Calu3 (cell line): ENCODE measurements at regions of chr14 and their contacts with region 1.

Region 1: GRCh38 chr14:64891839-64892375 is 12.2 kb upstream of the SPTB start:
- DNase-seq: peak; percentile 40
- H3K4me3 Mint-ChIP-seq: no peak overlapping the region
- H3K27ac Mint-ChIP-seq: no peak overlapping the region
- H3K4me1 Mint-ChIP-seq: no peaks in the 10 kb centered on the region
- H3K27me3 Mint-ChIP-seq: peaks cover 45% of the 10 kb centered on the region
- CTCF ChIP-seq: no peak

Region 2: DNA sequence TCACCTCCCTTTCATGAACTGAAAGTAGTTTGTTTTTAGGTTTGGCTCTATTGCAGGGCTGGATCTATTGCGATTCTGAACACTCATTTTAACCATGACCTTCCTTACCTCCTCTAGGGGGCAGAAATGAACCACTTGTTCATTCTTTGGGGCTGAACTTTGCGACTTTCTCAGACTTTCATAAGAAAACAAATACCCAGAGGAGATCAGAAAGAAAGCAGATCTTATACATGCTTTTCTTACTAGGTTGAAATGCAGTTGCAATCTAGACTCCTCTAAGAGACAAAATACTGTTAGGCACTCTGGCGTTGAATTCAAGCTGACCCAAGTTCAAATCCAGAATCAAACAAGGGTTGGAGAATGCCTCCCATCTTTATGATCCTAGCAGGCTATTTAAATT is 220.3 kb before region 1 on chr14:
- CTCF ChIA-PET with region 1: no interaction called
- intact Hi-C with region 1: loop called (anchors 5 kb)
- DNase-seq: no peak
- H3K4me3 Mint-ChIP-seq: no peak overlapping the region
- H3K27ac Mint-ChIP-seq: no peak overlapping the region
- H3K4me1 Mint-ChIP-seq: peaks cover 9% of the 10 kb centered on the region
- H3K27me3 Mint-ChIP-seq: no peaks in the 10 kb centered on the region
- CTCF ChIP-seq: peak; percentile 62

Region 3: GRCh38 chr14:64800000-64800399 is 91.9 kb before region 1 on chr14:
- CTCF ChIA-PET with region 1: interaction called, 17 read pairs
- intact Hi-C with region 1: loop called (anchors 2 kb)
- DNase-seq: peak; percentile 55
- H3K4me3 Mint-ChIP-seq: no peak overlapping the region
- H3K27ac Mint-ChIP-seq: no peak overlapping the region
- H3K4me1 Mint-ChIP-seq: no peaks in the 10 kb centered on the region
- H3K27me3 Mint-ChIP-seq: peaks cover 72% of the 10 kb centered on the region
- CTCF ChIP-seq: peak; percentile 35

Region 4: GRCh38 chr14:64823305-64823861 is 68.5 kb before region 1 on chr14:
- CTCF ChIA-PET with region 1: interaction called, 53 read pairs
- intact Hi-C with region 1: loop called (anchors 2 kb)
- DNase-seq: peak; percentile 86
- H3K4me3 Mint-ChIP-seq: peak overlapping the region; percentile 36
- H3K27ac Mint-ChIP-seq: no peak overlapping the region
- H3K4me1 Mint-ChIP-seq: peaks cover 8% of the 10 kb centered on the region
- H3K27me3 Mint-ChIP-seq: peaks cover 92% of the 10 kb centered on the region
- CTCF ChIP-seq: peak; percentile 76

Region 5: GRCh38 chr14:64919622-64920021 is 27.7 kb after region 1 on chr14:
- CTCF ChIA-PET with region 1: no interaction called
- intact Hi-C with region 1: no loop called
- DNase-seq: no peak
- H3K4me3 Mint-ChIP-seq: no peak overlapping the region
- H3K27ac Mint-ChIP-seq: no peak overlapping the region
- H3K4me1 Mint-ChIP-seq: peaks cover 38% of the 10 kb centered on the region
- H3K27me3 Mint-ChIP-seq: no peaks in the 10 kb centered on the region
- CTCF ChIP-seq: no peak